ENCODE measurements at regions of chr4 and their contacts with region 1.

Region 1: GRCh38 chr4:140153718-140154571 is at the start of gene MAML3:
- DNase-seq: peak; percentile 95
- H3K4me3 ChIP-seq: peak within 1 kb of the TSS; percentile 64 to 91 (median 67)
- H3K27ac ChIP-seq: peak within 1 kb of the TSS; percentile 99
- H3K4me1 ChIP-seq: peaks cover 10% of the 10 kb centered on the region
- H3K27me3 ChIP-seq: no peaks in the 10 kb centered on the region
- CTCF ChIP-seq: no peak
- POLR2A ChIP-seq: peak; percentile 53
- total RNA-seq, gene MAML3: 20.1 and 20.3 TPM in 2 replicates

Region 2: DNA sequence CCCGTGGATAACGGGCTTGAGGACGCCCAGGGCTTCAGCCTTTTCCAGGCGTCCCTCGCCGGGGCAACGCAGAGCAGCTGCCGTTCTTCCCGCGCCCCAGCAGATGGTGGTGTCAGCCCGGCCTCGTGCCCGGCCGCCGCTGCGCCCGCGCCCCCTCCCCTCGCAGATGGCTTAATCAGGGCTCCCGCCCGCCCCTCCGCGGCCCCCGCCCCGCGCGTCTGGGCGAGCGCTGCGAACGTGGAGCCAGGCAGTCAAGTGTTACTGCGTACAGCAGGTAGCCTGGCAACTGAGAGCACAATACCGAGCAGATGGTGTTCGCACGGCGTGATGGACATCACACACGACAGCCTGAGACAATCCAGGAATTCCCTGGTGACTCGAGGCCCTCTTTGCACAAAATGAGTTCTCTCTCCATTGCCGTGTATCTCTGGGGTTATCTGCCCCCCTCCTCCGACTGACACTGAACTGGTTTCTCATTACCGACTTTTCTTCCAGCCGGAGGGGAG is 419.0 kb before region 1 on chr4:
- CTCF ChIA-PET with region 1: interaction called, 11 read pairs
- POLR2A ChIA-PET with region 1: interaction called, 3 read pairs
- dilution Hi-C with region 1: no loop called
- intact Hi-C with region 1: loop called (anchors 1 kb)
- DNase-seq: peak; percentile 94
- H3K4me3 ChIP-seq: peak overlapping the region in 2 of 3 experiments; percentile 18 to 34
- H3K27ac ChIP-seq: peak overlapping the region; percentile 14
- H3K4me1 ChIP-seq: peaks cover 12% of the 10 kb centered on the region
- H3K27me3 ChIP-seq: no peaks in the 10 kb centered on the region
- CTCF ChIP-seq: peak; percentile 66 to 88
- POLR2A ChIP-seq: no peak

Region 3: GRCh38 chr4:139919521-139919920 is 234.4 kb before region 1 on chr4:
- CTCF ChIA-PET with region 1: no interaction called
- POLR2A ChIA-PET with region 1: no interaction called
- dilution Hi-C with region 1: no loop called
- intact Hi-C with region 1: loop called (anchors 1 kb)
- DNase-seq: peak; percentile 95
- H3K4me3 ChIP-seq: no peak overlapping the region
- H3K27ac ChIP-seq: peak overlapping the region; percentile 84
- H3K4me1 ChIP-seq: peaks cover 47% of the 10 kb centered on the region
- H3K27me3 ChIP-seq: no peaks in the 10 kb centered on the region
- CTCF ChIP-seq: no peak
- POLR2A ChIP-seq: peak; percentile 21

Region 4: GRCh38 chr4:139956507-139957017 is 197.4 kb before region 1 on chr4:
- CTCF ChIA-PET with region 1: no interaction called
- POLR2A ChIA-PET with region 1: no interaction called
- dilution Hi-C with region 1: no loop called
- intact Hi-C with region 1: no loop called
- DNase-seq: peak; percentile 62
- H3K4me3 ChIP-seq: no peak overlapping the region
- H3K27ac ChIP-seq: no peak overlapping the region
- H3K4me1 ChIP-seq: peaks cover 17% of the 10 kb centered on the region
- H3K27me3 ChIP-seq: no peaks in the 10 kb centered on the region
- CTCF ChIP-seq: no peak
- POLR2A ChIP-seq: no peak

Region 5: GRCh38 chr4:140090215-140090731 is 63.7 kb before region 1 on chr4:
- CTCF ChIA-PET with region 1: interaction called, 12 read pairs
- POLR2A ChIA-PET with region 1: interaction called, 17 read pairs
- dilution Hi-C with region 1: no loop called
- intact Hi-C with region 1: loop called (anchors 1 kb)
- DNase-seq: peak; percentile 73
- H3K4me3 ChIP-seq: no peak overlapping the region
- H3K27ac ChIP-seq: peak overlapping the region; percentile 89
- H3K4me1 ChIP-seq: peaks cover 63% of the 10 kb centered on the region
- H3K27me3 ChIP-seq: no peaks in the 10 kb centered on the region
- CTCF ChIP-seq: no peak
- POLR2A ChIP-seq: peak; percentile 58

Region 6: DNA sequence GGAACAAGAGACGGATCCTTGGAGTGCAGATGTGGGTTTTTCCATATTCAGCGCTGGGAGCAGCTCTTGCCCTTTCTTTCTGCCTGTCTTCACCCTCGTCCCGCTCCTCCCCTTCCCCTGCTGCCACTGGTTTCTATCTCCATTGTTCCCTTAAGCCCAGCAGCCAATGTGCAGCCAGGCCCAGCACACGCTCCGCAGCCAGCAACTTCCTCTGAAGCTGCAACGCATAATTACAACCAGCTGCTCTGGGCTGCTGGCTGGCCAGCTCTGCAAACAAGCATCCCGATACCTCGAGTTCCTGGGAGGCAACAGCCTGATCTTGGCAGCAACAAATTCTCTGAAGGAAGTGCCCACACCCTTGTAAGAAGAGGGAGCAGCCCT is 83.7 kb after region 1 on chr4:
- CTCF ChIA-PET with region 1: interaction called, 15 read pairs
- POLR2A ChIA-PET with region 1: interaction called, 4 read pairs
- dilution Hi-C with region 1: no loop called
- intact Hi-C with region 1: loop called (anchors 1 kb)
- DNase-seq: peak; percentile 89
- H3K4me3 ChIP-seq: no peak overlapping the region
- H3K27ac ChIP-seq: peak overlapping the region; percentile 30
- H3K4me1 ChIP-seq: peaks cover 34% of the 10 kb centered on the region
- H3K27me3 ChIP-seq: no peaks in the 10 kb centered on the region
- CTCF ChIP-seq: no peak
- POLR2A ChIP-seq: no peak

Region 7: GRCh38 chr4:140359562-140360427 is 205.8 kb after region 1 on chr4:
- CTCF ChIA-PET with region 1: interaction called, 5 read pairs
- POLR2A ChIA-PET with region 1: no interaction called
- dilution Hi-C with region 1: no loop called
- intact Hi-C with region 1: loop called (anchors 1 kb)
- DNase-seq: peak; percentile 86
- H3K4me3 ChIP-seq: no peak overlapping the region
- H3K27ac ChIP-seq: no peak overlapping the region
- H3K4me1 ChIP-seq: peaks cover 6% of the 10 kb centered on the region
- H3K27me3 ChIP-seq: no peaks in the 10 kb centered on the region
- CTCF ChIP-seq: peak; percentile 77 to 89
- POLR2A ChIP-seq: no peak

Measured in endothelial cell of umbilical vein (primary cell).